ENCODE measurements at regions of chr2 and their contacts with region 1.

Region 1: GRCh38 chr2:144325086-144325485 is 194.8 kb downstream of the ZEB2 start:
- DNase-seq: peak; percentile 70
- H3K4me3 Mint-ChIP-seq: peak overlapping the region; percentile 12
- H3K27ac Mint-ChIP-seq: peak overlapping the region; percentile 83
- H3K4me1 Mint-ChIP-seq: peaks cover 63% of the 10 kb centered on the region
- H3K27me3 Mint-ChIP-seq: no peaks in the 10 kb centered on the region

Region 2: GRCh38 chr2:144267239-144267638 is 57.8 kb before region 1 on chr2:
- CTCF ChIA-PET with region 1: no interaction called
- intact Hi-C with region 1: loop called (anchors 2 kb)
- DNase-seq: peak; percentile 19
- H3K4me3 Mint-ChIP-seq: no peak overlapping the region
- H3K27ac Mint-ChIP-seq: no peak overlapping the region
- H3K4me1 Mint-ChIP-seq: peaks cover 22% of the 10 kb centered on the region
- H3K27me3 Mint-ChIP-seq: no peaks in the 10 kb centered on the region

Region 3: GRCh38 chr2:144357623-144358373 is 32.7 kb after region 1 on chr2:
- CTCF ChIA-PET with region 1: no interaction called
- intact Hi-C with region 1: loop called (anchors 1 kb)
- DNase-seq: peak; percentile 47
- H3K4me3 Mint-ChIP-seq: no peak overlapping the region
- H3K27ac Mint-ChIP-seq: no peak overlapping the region
- H3K4me1 Mint-ChIP-seq: peaks cover 18% of the 10 kb centered on the region
- H3K27me3 Mint-ChIP-seq: no peaks in the 10 kb centered on the region

Region 4: GRCh38 chr2:144382849-144383248 is 57.8 kb after region 1 on chr2:
- CTCF ChIA-PET with region 1: no interaction called
- intact Hi-C with region 1: loop called (anchors 2 kb)
- DNase-seq: peak; percentile 29
- H3K4me3 Mint-ChIP-seq: no peak overlapping the region
- H3K27ac Mint-ChIP-seq: no peak overlapping the region
- H3K4me1 Mint-ChIP-seq: peaks cover 26% of the 10 kb centered on the region
- H3K27me3 Mint-ChIP-seq: peaks cover 9% of the 10 kb centered on the region

Region 5: GRCh38 chr2:144454466-144455287 is 129.6 kb after region 1 on chr2:
- CTCF ChIA-PET with region 1: no interaction called
- intact Hi-C with region 1: loop called (anchors 1 kb)
- DNase-seq: peak; percentile 21
- H3K4me3 Mint-ChIP-seq: no peak overlapping the region
- H3K27ac Mint-ChIP-seq: no peak overlapping the region
- H3K4me1 Mint-ChIP-seq: peaks cover 27% of the 10 kb centered on the region
- H3K27me3 Mint-ChIP-seq: peaks cover 33% of the 10 kb centered on the region

Region 6: DNA sequence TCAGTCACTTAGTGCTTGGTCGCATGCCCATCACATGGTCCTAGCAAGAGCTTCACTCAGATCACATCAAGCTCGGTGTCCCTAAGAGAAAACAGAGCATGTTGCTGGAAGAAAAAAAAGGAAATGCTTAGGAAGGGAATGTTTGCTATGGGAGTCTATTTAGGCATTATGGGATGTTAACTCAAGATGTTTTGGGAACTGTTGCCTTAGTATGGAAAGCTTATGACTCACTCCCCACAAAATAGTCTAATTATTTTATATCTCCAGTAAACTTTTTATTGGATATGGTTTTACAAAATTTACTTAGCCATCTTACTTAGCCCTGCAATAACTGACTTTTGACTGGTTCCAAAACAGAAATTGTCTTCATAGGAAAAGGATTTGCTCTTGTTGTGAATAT is 634.3 kb after region 1 on chr2:
- CTCF ChIA-PET with region 1: no interaction called
- intact Hi-C with region 1: no loop called
- DNase-seq: no peak
- H3K4me3 Mint-ChIP-seq: no peak overlapping the region
- H3K27ac Mint-ChIP-seq: no peak overlapping the region
- H3K4me1 Mint-ChIP-seq: no peaks in the 10 kb centered on the region
- H3K27me3 Mint-ChIP-seq: no peaks in the 10 kb centered on the region

Region 7: GRCh38 chr2:145350011-145350410 is 1024.9 kb after region 1 on chr2:
- CTCF ChIA-PET with region 1: no interaction called
- intact Hi-C with region 1: no loop called
- DNase-seq: no peak
- H3K4me3 Mint-ChIP-seq: no peak overlapping the region
- H3K27ac Mint-ChIP-seq: no peak overlapping the region
- H3K4me1 Mint-ChIP-seq: no peaks in the 10 kb centered on the region
- H3K27me3 Mint-ChIP-seq: no peaks in the 10 kb centered on the region

Measured in activated naive CD4-positive, alpha-beta T cell treated with anti-CD3 and anti-CD28 coated beads for 36 hours (primary cell).